PC-3 (cell line): ENCODE measurements at regions of chrX and their contacts with region 1.

Region 1: DNA sequence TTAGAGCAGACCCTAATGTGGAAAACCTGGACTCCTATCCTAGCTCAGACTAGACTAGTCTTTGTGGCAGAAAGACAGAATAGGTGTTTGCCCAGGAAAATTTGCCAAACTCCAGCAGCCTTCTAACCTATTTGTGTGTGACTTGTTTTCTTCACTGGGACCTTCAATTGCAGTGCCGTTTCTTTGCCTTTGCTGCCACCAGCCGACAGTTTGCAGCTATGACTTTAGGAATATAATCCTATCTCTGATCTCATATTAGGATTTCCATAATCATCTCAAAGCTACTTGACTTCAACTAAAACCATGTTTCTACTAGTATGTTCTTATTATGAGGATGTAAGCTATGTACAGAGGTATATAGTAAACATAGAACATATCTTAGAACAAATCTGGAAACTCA is 60.2 kb upstream of the PGAM4 start:
- DNase-seq: peak; percentile 66
- ATAC-seq: peak; percentile 77
- H3K4me3 ChIP-seq: no peak overlapping the region
- H3K27ac ChIP-seq: no peak overlapping the region
- H3K4me1 ChIP-seq: no peaks in the 10 kb centered on the region; the same call in 1 of the 2 replicates
- H3K27me3 ChIP-seq: no peaks in the 10 kb centered on the region
- CTCF ChIP-seq: peak; percentile 88

Region 2: GRCh38 chrX:77776659-77777058 is 253.0 kb before region 1 on chrX:
- CTCF ChIA-PET with region 1: no interaction called
- POLR2A ChIA-PET with region 1: no interaction called
- intact Hi-C with region 1: no loop called
- DNase-seq: no peak
- ATAC-seq: no peak
- H3K4me3 ChIP-seq: no peak overlapping the region
- H3K27ac ChIP-seq: no peak overlapping the region
- H3K4me1 ChIP-seq: no peaks in the 10 kb centered on the region
- H3K27me3 ChIP-seq: no peaks in the 10 kb centered on the region
- CTCF ChIP-seq: no peak

Region 3: DNA sequence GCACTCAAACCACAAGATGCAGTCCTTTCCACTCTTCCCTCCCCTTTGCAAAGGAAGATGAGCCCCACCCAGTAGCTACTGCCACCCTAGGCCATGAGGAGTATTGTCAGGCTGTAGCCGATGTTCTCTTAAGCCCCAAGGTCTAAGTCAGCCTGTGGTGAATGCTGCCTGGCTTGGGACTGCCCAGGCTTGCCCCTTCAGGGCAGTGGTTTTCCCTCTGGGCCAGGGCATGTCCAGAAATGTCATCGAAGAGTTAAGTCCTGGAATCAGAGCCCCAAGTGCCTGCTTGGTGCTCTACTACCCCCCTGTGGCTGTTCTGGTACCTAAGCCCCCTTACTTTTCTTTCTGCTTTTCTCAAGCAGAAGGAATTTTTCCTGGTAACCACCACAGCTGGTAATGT is 62.6 kb after region 1 on chrX:
- CTCF ChIA-PET with region 1: interaction called, 5 read pairs
- POLR2A ChIA-PET with region 1: no interaction called
- intact Hi-C with region 1: loop called (anchors 5 kb)
- DNase-seq: peak; percentile 57
- ATAC-seq: peak; percentile 85
- H3K4me3 ChIP-seq: no peak overlapping the region
- H3K27ac ChIP-seq: no peak overlapping the region
- H3K4me1 ChIP-seq: peaks cover 4% of the 10 kb centered on the region; the same call in 1 of the 2 replicates
- H3K27me3 ChIP-seq: no peaks in the 10 kb centered on the region
- CTCF ChIP-seq: peak; percentile 55